Caco-2 (cell line): ENCODE measurements at regions of chr6 and their contacts with region 1.

Region 1: DNA sequence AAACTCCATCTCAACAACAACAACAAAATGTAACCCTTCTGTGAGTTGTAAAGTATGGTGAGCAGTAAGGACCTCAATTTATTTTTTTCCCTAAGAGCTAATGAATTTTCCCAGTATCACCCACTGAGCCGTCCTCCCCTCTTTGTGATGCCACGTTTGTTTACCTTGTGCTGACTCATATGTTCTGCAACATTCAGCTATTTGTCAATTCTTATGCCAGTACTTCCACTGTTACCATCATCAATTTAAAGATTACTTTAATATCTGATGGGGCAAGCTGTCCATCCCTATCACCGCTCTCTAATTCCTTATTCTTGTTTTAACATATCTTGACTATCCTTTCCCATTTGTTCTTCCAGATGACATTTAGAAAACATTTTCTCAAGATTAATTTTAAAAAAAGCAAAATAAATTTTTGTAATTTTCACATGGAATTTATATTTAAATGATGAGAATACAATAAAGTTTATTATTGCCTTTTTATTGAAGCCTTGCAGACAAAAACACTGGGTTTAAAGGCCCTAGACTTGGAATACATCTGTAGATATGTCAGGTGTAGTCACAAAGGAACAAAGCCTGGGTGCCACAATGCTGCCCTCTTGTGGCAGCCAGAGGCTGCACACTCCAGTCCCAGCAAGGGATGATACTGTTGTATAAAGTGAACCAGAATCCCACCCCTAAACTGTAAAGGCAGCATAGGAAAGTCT is 37.4 kb downstream of the MAK start:
- DNase-seq: peak; percentile 54 to 73
- H3K4me3 ChIP-seq: no peak overlapping the region
- H3K4me3 Mint-ChIP-seq: no peak overlapping the region
- H3K27ac Mint-ChIP-seq: no peak overlapping the region
- H3K4me1 ChIP-seq: no peaks in the 10 kb centered on the region
- H3K4me1 Mint-ChIP-seq: peaks cover 7% of the 10 kb centered on the region
- H3K27me3 ChIP-seq: no peaks in the 10 kb centered on the region
- H3K27me3 Mint-ChIP-seq: no peaks in the 10 kb centered on the region
- CTCF ChIP-seq: peak; percentile 88 to 97

Region 2: DNA sequence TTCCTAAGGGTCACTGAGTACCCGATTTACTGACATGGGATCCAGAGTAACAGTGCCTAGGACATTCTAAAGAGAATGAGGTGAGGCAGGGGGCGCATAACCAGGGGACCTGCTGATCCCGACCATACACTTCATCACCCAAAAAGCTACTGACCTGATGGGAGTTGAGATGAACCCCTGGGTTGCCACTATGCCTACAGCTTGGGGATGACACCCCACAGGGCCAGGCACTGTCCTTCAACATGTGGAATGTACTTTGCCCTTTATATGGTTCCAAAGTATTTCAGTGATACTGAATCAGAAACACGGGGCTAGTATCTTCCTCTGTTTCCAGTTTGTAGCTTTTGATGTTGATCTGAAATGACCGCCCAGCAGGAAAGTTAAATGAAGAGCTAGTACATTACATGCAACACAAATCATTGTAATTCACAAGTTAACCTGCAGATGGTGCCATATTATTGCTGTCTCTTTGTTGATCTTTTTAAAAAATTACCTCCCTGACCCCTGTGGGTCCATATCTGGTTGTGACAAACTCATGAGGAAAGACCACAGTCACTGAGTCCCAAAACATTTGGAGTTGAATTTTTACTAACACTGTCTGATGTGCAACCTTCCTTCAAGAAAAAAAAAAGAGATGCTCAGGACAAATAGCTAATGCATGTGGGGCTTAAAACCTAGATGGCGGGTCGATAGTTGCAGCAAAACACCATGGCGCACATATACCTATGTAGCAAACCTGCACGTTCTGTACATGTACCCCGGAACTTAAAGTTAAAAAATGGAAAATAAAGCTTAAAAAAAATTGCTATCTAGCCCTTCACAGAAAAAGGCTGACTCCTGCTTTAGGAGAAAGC is 322.6 kb before region 1 on chr6:
- CTCF ChIA-PET with region 1: interaction called, 17 read pairs
- POLR2A ChIA-PET with region 1: no interaction called
- intact Hi-C with region 1: loop called (anchors 1 kb)
- DNase-seq: peak in 1 of 2 experiments; percentile 59
- H3K4me3 ChIP-seq: no peak overlapping the region
- H3K4me3 Mint-ChIP-seq: no peak overlapping the region
- H3K27ac Mint-ChIP-seq: no peak overlapping the region
- H3K4me1 ChIP-seq: no peaks in the 10 kb centered on the region
- H3K4me1 Mint-ChIP-seq: peaks cover 12% of the 10 kb centered on the region
- H3K27me3 ChIP-seq: no peaks in the 10 kb centered on the region
- H3K27me3 Mint-ChIP-seq: no peaks in the 10 kb centered on the region
- CTCF ChIP-seq: peak; percentile 50 to 80

Region 3: GRCh38 chr6:10510592-10511367 is 290.2 kb before region 1 on chr6:
- CTCF ChIA-PET with region 1: no interaction called
- POLR2A ChIA-PET with region 1: no interaction called
- intact Hi-C with region 1: loop called (anchors 1 kb)
- DNase-seq: peak; percentile 80
- H3K4me3 ChIP-seq: no peak overlapping the region
- H3K4me3 Mint-ChIP-seq: no peak overlapping the region
- H3K27ac Mint-ChIP-seq: peak overlapping the region; percentile 66
- H3K4me1 ChIP-seq: peaks cover 15% of the 10 kb centered on the region
- H3K4me1 Mint-ChIP-seq: peaks cover 22% of the 10 kb centered on the region
- H3K27me3 ChIP-seq: no peaks in the 10 kb centered on the region
- H3K27me3 Mint-ChIP-seq: no peaks in the 10 kb centered on the region
- CTCF ChIP-seq: peak; percentile 56 to 87

Region 4: GRCh38 chr6:10580570-10580969 is 220.4 kb before region 1 on chr6:
- CTCF ChIA-PET with region 1: no interaction called
- POLR2A ChIA-PET with region 1: no interaction called
- intact Hi-C with region 1: no loop called
- DNase-seq: no peak
- H3K4me3 ChIP-seq: no peak overlapping the region
- H3K4me3 Mint-ChIP-seq: no peak overlapping the region
- H3K27ac Mint-ChIP-seq: peak overlapping the region; percentile 23
- H3K4me1 ChIP-seq: peaks cover 48% of the 10 kb centered on the region
- H3K4me1 Mint-ChIP-seq: peaks cover 38% of the 10 kb centered on the region
- H3K27me3 ChIP-seq: no peaks in the 10 kb centered on the region
- H3K27me3 Mint-ChIP-seq: no peaks in the 10 kb centered on the region
- CTCF ChIP-seq: no peak

Region 5: DNA sequence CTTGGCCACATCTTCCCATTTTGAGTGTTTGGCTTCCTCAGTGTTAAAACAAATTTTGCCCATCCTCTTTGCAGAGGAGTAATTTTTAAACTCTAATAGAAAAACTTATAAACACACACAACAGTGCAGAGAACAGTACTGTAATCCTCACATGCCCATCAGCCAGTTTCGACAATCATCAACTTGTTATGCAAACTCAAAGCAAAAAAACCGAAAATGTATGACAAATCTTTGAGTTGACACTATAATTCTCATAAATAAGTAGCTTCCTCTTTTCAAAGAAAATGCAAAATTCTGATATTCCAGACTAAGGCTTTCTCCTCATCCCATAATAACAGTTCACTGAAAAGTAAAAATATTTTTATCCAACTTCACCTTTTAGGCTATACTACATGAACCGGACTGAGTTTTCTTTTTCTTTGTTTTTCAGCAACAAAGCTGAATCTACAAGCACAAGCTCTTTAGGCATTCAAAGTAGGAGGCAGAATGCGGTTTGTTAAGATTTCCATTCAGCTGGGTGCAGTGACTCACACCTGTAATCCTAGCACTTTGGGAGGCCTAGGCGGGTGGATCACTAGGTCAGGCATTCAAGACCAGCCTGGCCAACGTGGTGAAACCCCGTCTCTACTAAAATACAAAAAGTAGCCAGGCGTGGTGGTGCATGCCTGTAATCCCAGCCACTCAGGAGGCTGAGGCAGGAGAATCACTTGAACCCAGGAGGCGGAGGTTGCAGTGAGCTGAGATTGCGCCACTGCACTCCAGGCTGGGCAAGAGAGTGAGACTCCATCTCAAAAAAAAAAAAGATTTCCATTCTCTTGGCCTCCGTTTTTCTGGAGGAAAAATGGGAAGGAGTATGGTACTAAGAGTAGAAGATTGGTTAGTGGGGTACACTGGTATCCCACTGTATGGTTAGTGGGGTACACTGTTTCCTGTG is 205.0 kb before region 1 on chr6:
- CTCF ChIA-PET with region 1: no interaction called
- POLR2A ChIA-PET with region 1: no interaction called
- intact Hi-C with region 1: no loop called
- DNase-seq: no peak
- H3K4me3 ChIP-seq: no peak overlapping the region
- H3K4me3 Mint-ChIP-seq: no peak overlapping the region
- H3K27ac Mint-ChIP-seq: no peak overlapping the region
- H3K4me1 ChIP-seq: peaks cover 11% of the 10 kb centered on the region; the same call in 1 of the 2 replicates
- H3K4me1 Mint-ChIP-seq: peaks cover 18% of the 10 kb centered on the region
- H3K27me3 ChIP-seq: no peaks in the 10 kb centered on the region
- H3K27me3 Mint-ChIP-seq: no peaks in the 10 kb centered on the region
- CTCF ChIP-seq: no peak

Region 6: DNA sequence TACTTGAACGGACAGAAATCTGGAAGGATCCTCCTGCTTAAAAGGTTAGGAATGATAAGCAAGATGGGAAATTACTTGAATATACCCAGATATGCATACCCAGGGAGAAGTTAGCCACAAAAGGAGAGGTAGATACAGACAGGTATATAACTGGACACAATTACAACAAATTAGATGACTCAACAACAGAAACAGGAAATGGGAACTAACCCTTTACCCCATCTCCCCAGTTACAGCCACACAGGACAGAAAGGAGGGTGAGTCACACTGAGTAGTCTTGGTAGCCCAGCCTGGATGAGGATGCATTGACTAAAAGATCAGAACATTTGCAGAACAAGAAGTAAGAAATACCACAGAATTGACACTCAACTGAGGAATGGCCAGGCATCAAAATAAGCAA is 167.8 kb before region 1 on chr6:
- CTCF ChIA-PET with region 1: no interaction called
- POLR2A ChIA-PET with region 1: no interaction called
- intact Hi-C with region 1: loop called (anchors 1 kb)
- DNase-seq: no peak
- H3K4me3 ChIP-seq: no peak overlapping the region
- H3K4me3 Mint-ChIP-seq: no peak overlapping the region
- H3K27ac Mint-ChIP-seq: no peak overlapping the region
- H3K4me1 ChIP-seq: no peaks in the 10 kb centered on the region
- H3K4me1 Mint-ChIP-seq: no peaks in the 10 kb centered on the region
- H3K27me3 ChIP-seq: no peaks in the 10 kb centered on the region
- H3K27me3 Mint-ChIP-seq: no peaks in the 10 kb centered on the region
- CTCF ChIP-seq: no peak

Region 7: DNA sequence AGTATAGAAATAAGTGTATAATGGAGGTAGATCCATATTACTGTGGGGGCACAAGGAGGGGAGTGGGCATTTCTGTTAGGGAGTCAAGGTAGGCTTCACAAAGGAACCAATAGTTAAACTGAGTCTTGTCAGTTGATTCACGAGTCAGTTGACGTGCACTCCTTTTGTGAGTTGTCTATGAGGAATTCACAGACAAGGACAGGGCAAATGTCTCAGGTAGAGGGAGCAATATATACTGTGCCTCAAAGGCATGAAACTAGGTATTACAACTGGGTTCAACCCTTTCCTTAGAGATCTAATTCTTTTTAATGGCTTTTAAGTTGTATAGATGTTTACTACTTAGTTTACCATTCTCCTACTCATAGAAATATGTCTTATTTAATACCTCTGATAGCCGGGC is 67.1 kb before region 1 on chr6:
- CTCF ChIA-PET with region 1: no interaction called
- POLR2A ChIA-PET with region 1: no interaction called
- intact Hi-C with region 1: loop called (anchors 2 kb)
- DNase-seq: no peak
- H3K4me3 ChIP-seq: no peak overlapping the region
- H3K4me3 Mint-ChIP-seq: peak overlapping the region; percentile 15
- H3K27ac Mint-ChIP-seq: peak overlapping the region; percentile 66
- H3K4me1 ChIP-seq: peaks cover 25% of the 10 kb centered on the region
- H3K4me1 Mint-ChIP-seq: peaks cover 13% of the 10 kb centered on the region
- H3K27me3 ChIP-seq: no peaks in the 10 kb centered on the region
- H3K27me3 Mint-ChIP-seq: no peaks in the 10 kb centered on the region
- CTCF ChIP-seq: no peak

Region 8: GRCh38 chr6:10759312-10759839 is 41.6 kb before region 1 on chr6:
- CTCF ChIA-PET with region 1: no interaction called
- POLR2A ChIA-PET with region 1: no interaction called
- intact Hi-C with region 1: loop called (anchors 2 kb)
- DNase-seq: peak; percentile 46 to 68
- H3K4me3 ChIP-seq: no peak overlapping the region
- H3K4me3 Mint-ChIP-seq: no peak overlapping the region
- H3K27ac Mint-ChIP-seq: peak overlapping the region; percentile 80
- H3K4me1 ChIP-seq: peaks cover 4% of the 10 kb centered on the region; the same call in 1 of the 2 replicates
- H3K4me1 Mint-ChIP-seq: peaks cover 6% of the 10 kb centered on the region
- H3K27me3 ChIP-seq: no peaks in the 10 kb centered on the region
- H3K27me3 Mint-ChIP-seq: no peaks in the 10 kb centered on the region
- CTCF ChIP-seq: peak; percentile 42 to 44

Region 9: GRCh38 chr6:11023032-11023431 is 222.1 kb after region 1 on chr6:
- CTCF ChIA-PET with region 1: no interaction called
- POLR2A ChIA-PET with region 1: no interaction called
- intact Hi-C with region 1: no loop called
- DNase-seq: no peak
- H3K4me3 ChIP-seq: no peak overlapping the region
- H3K4me3 Mint-ChIP-seq: no peak overlapping the region
- H3K27ac Mint-ChIP-seq: no peak overlapping the region
- H3K4me1 ChIP-seq: 0 out of 2 replicates have a peak, but pooled peaks cover 4% of the 10 kb centered on the region
- H3K4me1 Mint-ChIP-seq: no peaks in the 10 kb centered on the region
- H3K27me3 ChIP-seq: no peaks in the 10 kb centered on the region
- H3K27me3 Mint-ChIP-seq: no peaks in the 10 kb centered on the region
- CTCF ChIP-seq: no peak